ENCODE measurements at regions of chr6 and their contacts with region 1.

Region 1: GRCh38 chr6:28080631-28081485 is 490 bp downstream of the ZNF165 start:
- DNase-seq: peak; percentile 99
- H3K4me3 ChIP-seq: peak overlapping the region; percentile 69 to 89 (median 74)
- H3K27ac ChIP-seq: peak overlapping the region; percentile 81 to 89 (median 88)
- H3K4me1 ChIP-seq: peaks cover 12% of the 10 kb centered on the region in 4 donors
- H3K27me3 ChIP-seq: no peaks in the 10 kb centered on the region
- CTCF ChIP-seq: no peak
- EP300 ChIP-seq: no peak
- POLR2A ChIP-seq: no peak

Region 2: GRCh38 chr6:28011722-28012121 is 69.1 kb before region 1 on chr6:
- intact Hi-C with region 1: no loop called
- DNase-seq: no peak
- H3K4me3 ChIP-seq: no peak overlapping the region
- H3K27ac ChIP-seq: no peak overlapping the region
- H3K4me1 ChIP-seq: no peaks in the 10 kb centered on the region
- H3K27me3 ChIP-seq: no peaks in the 10 kb centered on the region
- CTCF ChIP-seq: no peak
- EP300 ChIP-seq: no peak
- POLR2A ChIP-seq: no peak

Region 3: DNA sequence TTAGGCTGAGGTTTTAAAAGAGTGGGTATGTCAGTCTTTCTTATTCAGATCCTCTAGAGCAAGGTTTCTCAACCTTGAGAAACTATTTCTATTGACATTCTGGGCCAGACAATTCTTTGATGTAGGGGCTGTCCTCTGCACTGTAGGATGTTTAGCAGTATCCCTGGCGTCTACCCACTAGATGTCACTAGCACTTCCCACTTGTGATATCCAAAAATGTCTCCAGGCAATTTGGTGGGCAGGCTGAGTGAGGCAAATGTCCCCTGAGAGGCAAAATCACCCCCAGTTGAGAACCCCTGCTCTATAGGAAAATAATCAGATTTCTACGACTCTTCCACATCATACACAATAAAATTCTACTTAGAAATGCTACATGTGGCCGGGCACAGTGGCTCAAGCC is 53.2 kb after region 1 on chr6:
- intact Hi-C with region 1: loop called (anchors 5 kb)
- DNase-seq: no peak
- H3K4me3 ChIP-seq: no peak overlapping the region
- H3K27ac ChIP-seq: peak overlapping the region in 1 of 4 donors; percentile 26
- H3K4me1 ChIP-seq: peaks cover 25 to 40% (median 33%) of the 10 kb centered on the region in 4 donors
- H3K27me3 ChIP-seq: no peaks in the 10 kb centered on the region
- CTCF ChIP-seq: peak in 1 of 3 experiments; percentile 31
- EP300 ChIP-seq: no peak
- POLR2A ChIP-seq: no peak

Measured in esophagus muscularis mucosa (tissue), 4 donors.